Ascending aorta (tissue), 2 donors: ENCODE measurements at regions of chr10 and their contacts with region 1.

Region 1: GRCh38 chr10:24209946-24210491 is 1.1 kb downstream of the KIAA1217 start:
- DNase-seq: no peak
- H3K4me3 ChIP-seq: peak overlapping the region; percentile 66 to 71
- H3K27ac ChIP-seq: peak overlapping the region in 1 of 2 donors; percentile 1
- H3K4me1 ChIP-seq: peaks cover 0 to 7% of the 10 kb centered on the region in 2 donors
- H3K27me3 ChIP-seq: no peaks in the 10 kb centered on the region
- CTCF ChIP-seq: no peak

Region 2: DNA sequence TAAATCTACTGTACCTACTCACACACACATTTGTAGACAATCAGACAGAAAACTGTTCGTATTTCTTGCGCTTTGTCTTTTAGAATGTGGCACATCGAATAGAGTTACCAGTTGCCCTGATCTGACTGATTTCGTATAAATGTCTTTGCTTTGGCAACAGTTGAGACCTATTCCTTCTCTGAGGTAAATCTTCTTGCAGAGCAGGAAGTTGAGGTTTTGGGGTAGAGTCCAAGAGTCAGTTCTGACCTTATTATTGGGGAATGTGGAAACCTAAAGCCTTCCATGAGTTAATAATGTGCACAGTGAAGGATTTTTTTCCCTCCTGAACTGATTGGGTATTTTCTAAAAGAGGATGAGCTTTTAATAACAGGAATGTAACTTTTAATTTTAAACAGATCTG is 134.3 kb after region 1 on chr10:
- intact Hi-C with region 1: loop called (anchors 5 kb)
- DNase-seq: no peak
- H3K4me3 ChIP-seq: peak overlapping the region in 1 of 2 donors; percentile 51
- H3K27ac ChIP-seq: peak overlapping the region; percentile 78 to 81
- H3K4me1 ChIP-seq: peaks cover 3 to 27% of the 10 kb centered on the region in 2 donors
- H3K27me3 ChIP-seq: no peaks in the 10 kb centered on the region
- CTCF ChIP-seq: no peak

Region 3: DNA sequence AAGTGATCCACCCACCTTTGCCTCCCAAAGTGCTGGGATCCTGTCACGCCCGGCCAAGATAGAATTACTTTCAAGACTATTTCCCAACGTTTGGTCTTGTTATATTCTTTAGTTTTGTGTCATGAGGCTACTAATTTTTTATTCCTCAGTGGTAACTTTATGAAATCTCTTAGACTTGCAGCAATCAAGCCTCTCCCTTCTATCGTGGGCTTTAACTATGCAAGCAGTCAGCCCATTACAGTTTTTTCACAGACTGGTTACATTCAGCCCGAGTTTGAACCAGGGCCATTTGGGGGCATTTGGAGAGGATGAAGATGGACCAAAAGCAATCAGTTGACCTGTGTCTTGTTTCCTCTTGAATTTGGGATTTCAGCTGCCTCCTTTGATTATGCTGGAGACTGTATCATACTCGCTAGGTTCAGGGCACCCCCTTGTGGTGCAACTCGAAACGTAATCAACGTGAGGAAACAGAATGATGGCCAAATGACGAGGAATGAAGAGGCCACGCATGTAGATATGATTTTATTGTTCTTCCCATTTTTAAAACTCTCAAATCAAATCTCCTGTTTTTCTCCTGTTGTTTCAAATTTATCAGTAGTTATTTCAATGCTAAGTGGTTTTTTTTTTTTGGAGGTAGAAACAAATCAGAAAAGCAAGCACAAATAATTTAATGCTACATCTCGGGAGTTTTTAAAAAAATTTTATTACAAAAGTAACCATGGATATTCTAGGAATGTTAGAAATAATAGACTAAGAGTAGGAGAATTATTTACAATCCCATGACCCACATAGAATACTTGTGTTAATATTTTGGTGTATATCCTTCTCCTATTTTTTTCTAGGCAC is 150.5 kb after region 1 on chr10:
- intact Hi-C with region 1: loop called (anchors 5 kb)
- DNase-seq: peak in 1 of 2 donors; percentile 76
- H3K4me3 ChIP-seq: no peak overlapping the region
- H3K27ac ChIP-seq: no peak overlapping the region
- H3K4me1 ChIP-seq: peaks cover 0 to 2% of the 10 kb centered on the region in 2 donors
- H3K27me3 ChIP-seq: no peaks in the 10 kb centered on the region
- CTCF ChIP-seq: peak; percentile 45 to 75 (median 75)